Endothelial cell of umbilical vein (primary cell): ENCODE measurements at regions of chr11 and their contacts with region 1.

Region 1: DNA sequence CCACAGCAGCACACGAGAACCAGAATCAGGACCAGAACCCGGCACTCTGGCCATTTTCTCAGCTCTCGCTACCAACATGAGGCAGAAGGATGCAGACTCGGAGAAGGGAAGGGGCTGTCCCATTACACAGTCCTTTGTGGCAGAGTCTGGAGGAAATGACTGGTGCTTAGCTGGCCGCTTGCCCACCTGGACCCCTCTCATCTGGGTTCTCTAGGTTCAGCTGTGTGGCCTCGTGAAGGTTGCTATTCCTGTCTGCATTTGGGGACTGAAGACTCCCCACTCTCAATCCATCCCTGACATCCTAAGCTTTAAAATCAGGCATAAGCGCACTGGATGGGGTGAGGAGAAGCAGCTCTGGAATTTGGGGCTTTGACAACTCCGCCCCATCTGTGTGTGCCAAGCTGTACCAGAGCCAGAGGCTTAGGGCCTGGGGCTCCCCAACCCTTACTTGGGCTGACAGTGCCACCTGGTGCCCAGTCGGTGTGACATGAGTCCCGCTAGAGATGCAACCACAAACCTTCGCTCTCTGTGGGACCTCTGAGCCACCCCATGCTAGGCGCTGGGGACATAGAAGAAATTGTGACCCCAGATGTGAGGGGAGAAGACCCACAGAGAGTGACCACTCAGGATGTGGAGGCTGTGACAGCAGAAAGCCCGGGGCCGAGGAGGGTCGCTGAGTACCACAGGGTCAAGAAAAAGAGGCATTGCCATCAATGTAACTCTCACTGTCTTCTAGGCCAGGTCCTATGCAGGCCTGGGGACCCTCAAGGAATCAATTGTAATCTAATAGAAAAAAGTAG is 35.9 kb upstream of the FCHSD2 start:
- DNase-seq: peak; percentile 94
- H3K4me3 ChIP-seq: no peak overlapping the region
- H3K27ac ChIP-seq: peak overlapping the region; percentile 90
- H3K4me1 ChIP-seq: peaks cover 28% of the 10 kb centered on the region
- H3K27me3 ChIP-seq: no peaks in the 10 kb centered on the region
- CTCF ChIP-seq: peak; percentile 76 to 85
- POLR2A ChIP-seq: no peak

Region 2: DNA sequence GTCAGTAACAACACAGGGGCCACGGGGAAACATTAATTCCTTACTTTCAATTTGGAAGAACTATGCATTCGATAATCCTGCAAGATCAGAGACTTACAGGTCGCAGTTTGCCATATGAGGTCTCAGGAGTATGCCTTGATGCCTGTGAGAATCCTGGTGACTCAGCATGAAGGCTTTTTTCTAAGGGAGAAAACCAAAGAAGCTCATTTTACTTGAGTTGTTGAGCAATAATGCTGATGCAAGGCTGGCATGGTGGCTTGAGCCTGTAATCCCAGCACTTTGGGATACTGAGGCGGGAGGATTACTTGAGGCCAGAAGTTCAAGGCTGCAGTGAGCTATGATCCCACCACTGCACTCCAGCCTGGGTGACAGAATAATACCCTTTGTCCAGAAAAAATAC is 337.2 kb before region 1 on chr11:
- CTCF ChIA-PET with region 1: interaction called, 15 read pairs
- POLR2A ChIA-PET with region 1: no interaction called
- dilution Hi-C with region 1: no loop called
- intact Hi-C with region 1: no loop called
- DNase-seq: no peak
- H3K4me3 ChIP-seq: no peak overlapping the region
- H3K27ac ChIP-seq: no peak overlapping the region
- H3K4me1 ChIP-seq: peaks cover 11% of the 10 kb centered on the region
- H3K27me3 ChIP-seq: no peaks in the 10 kb centered on the region
- CTCF ChIP-seq: no peak
- POLR2A ChIP-seq: no peak

Region 3: GRCh38 chr11:73141848-73142286 is 36.1 kb before region 1 on chr11:
- CTCF ChIA-PET with region 1: interaction called, 64 read pairs
- POLR2A ChIA-PET with region 1: interaction called, 5 read pairs
- dilution Hi-C with region 1: no loop called
- intact Hi-C with region 1: loop called (anchors 1 kb)
- DNase-seq: peak; percentile 79
- H3K4me3 ChIP-seq: peak overlapping the region; percentile 56 to 95 (median 90)
- H3K27ac ChIP-seq: peak overlapping the region; percentile 88
- H3K4me1 ChIP-seq: peaks cover 37% of the 10 kb centered on the region
- H3K27me3 ChIP-seq: no peaks in the 10 kb centered on the region
- CTCF ChIP-seq: no peak
- POLR2A ChIP-seq: no peak

Region 4: GRCh38 chr11:73164803-73165540 is 13.0 kb before region 1 on chr11:
- CTCF ChIA-PET with region 1: interaction called, 21 read pairs
- POLR2A ChIA-PET with region 1: interaction called, 3 read pairs
- dilution Hi-C with region 1: no loop called
- intact Hi-C with region 1: no loop called
- DNase-seq: no peak
- H3K4me3 ChIP-seq: no peak overlapping the region
- H3K27ac ChIP-seq: no peak overlapping the region
- H3K4me1 ChIP-seq: peaks cover 11% of the 10 kb centered on the region
- H3K27me3 ChIP-seq: no peaks in the 10 kb centered on the region
- CTCF ChIP-seq: no peak
- POLR2A ChIP-seq: no peak

Region 5: DNA sequence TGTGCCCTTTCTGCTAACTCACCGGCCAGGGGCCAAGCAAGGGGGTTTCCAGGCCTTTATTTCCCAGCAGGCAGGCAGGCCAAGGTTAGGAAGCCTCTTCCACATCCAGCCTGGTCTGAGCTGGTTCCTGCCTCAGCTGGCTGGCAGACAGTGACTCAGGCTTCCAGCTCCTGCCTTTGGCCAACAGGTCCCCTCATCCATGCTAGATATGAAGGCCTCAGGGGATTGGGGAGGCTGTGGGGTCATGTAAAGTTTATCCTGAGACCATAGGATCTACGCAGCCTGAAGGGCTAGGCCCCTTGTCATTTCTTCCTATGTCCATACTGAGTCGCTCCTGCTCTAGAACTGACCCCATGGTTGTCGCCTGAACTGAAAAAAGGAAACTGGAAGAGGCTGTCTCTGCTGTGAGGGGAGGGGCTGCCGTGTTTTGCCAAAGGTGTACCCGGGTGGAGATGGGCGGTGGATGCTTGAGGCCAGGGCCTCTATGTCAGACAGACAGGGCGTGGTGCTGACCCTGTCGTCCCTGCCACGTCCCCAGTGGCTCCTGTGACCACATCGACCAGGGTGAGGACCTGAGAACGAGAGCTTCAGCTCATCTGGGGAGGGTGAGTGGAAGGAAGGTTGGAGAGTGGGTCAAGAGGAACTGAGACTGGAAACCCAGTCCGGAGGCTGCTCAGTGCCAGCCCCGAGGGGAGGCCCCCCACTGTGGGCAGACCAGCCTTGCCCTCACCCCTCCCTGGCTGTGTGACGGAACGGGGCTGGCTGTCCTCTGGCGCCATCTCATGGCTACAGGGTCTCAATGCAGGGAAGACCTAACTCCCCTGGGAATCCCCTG is 111.1 kb after region 1 on chr11:
- CTCF ChIA-PET with region 1: interaction called, 110 read pairs
- POLR2A ChIA-PET with region 1: interaction called, 3 read pairs
- dilution Hi-C with region 1: no loop called
- intact Hi-C with region 1: no loop called
- DNase-seq: peak; percentile 86
- H3K4me3 ChIP-seq: no peak overlapping the region
- H3K27ac ChIP-seq: peak overlapping the region; percentile 71
- H3K4me1 ChIP-seq: peaks cover 17% of the 10 kb centered on the region
- H3K27me3 ChIP-seq: no peaks in the 10 kb centered on the region
- CTCF ChIP-seq: peak; percentile 95
- POLR2A ChIP-seq: no peak